ENCODE measurements at regions of chr21 and their contacts with region 1.

Region 1: DNA sequence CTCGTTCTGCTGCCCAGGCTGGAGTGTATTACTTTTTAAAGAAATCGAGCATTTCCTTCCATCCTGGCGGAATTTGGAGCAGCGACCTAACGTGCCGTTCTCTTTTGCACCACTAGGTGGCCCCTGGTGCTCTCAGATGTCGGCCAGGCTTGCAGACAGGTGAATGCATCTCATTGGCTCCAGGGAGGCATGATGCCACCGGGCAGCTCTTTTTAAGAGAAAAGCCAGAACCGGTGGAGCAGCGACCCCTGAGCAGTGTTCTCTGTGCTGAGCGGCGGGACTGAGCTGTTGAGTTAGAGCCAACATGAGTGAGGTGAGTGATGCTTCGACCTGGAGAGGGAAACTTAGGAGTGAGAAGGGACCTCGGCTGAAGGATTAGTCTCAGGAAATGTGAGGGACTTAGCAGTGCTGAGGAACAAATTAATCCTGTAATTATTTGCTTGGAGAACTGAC is at the start of gene PCP4:
- DNase-seq: peak; percentile 78 to 93
- H3K4me3 ChIP-seq: no peak within 1 kb of the TSS; a peak in 2 of 8 replicates
- H3K27ac ChIP-seq: no peak within 1 kb of the TSS
- H3K4me1 ChIP-seq: peaks cover 0 to 5% (median 1%) of the 10 kb centered on the region in 4 experiments; a peak in 4 of 7 replicates
- H3K27me3 ChIP-seq: no peaks in the 10 kb centered on the region
- CTCF ChIP-seq: peak; percentile 87 to 97 (median 87)
- EP300 ChIP-seq: no peak
- POLR2A ChIP-seq: no peak
- RAD21 ChIP-seq: peak; percentile 92 to 93
- total RNA-seq, gene PCP4: 1.8 and 2.3 TPM in 2 replicates

Region 2: DNA sequence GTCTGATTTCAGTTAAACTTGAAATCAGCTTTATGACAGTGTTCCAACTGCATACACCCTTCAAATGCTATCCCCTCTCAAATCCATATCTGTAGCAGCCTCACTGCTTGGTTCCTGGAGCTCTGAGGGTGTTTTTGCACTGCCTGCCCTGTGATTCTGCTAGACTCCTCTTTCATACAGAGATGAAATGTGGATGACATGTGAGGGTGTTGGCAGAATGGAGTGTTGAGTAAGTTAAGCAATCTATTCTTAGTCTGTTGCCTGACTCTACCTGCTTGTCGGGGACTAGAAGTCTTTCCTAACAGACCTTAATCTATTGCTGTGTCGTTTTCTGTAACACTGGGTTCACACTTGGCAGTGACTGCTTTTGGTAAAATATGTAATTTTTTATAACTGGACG is 112.4 kb before region 1 on chr21:
- CTCF ChIA-PET with region 1: no interaction called
- POLR2A ChIA-PET with region 1: no interaction called
- DNase-seq: no peak
- H3K4me3 ChIP-seq: no peak overlapping the region
- H3K27ac ChIP-seq: no peak overlapping the region
- H3K4me1 ChIP-seq: no peaks in the 10 kb centered on the region
- H3K27me3 ChIP-seq: no peaks in the 10 kb centered on the region; a peak in 1 of 7 replicates
- CTCF ChIP-seq: no peak
- EP300 ChIP-seq: no peak
- POLR2A ChIP-seq: no peak
- RAD21 ChIP-seq: no peak

Region 3: GRCh38 chr21:39852021-39852721 is 15.1 kb before region 1 on chr21:
- CTCF ChIA-PET with region 1: interaction called, 26 read pairs
- POLR2A ChIA-PET with region 1: no interaction called
- DNase-seq: no peak
- H3K4me3 ChIP-seq: no peak overlapping the region
- H3K27ac ChIP-seq: no peak overlapping the region
- H3K4me1 ChIP-seq: 0 out of 7 replicates have a peak, but pooled peaks cover 0 to 4% (median 0%) of the 10 kb centered on the region in 4 experiments
- H3K27me3 ChIP-seq: no peaks in the 10 kb centered on the region
- CTCF ChIP-seq: no peak
- EP300 ChIP-seq: no peak
- POLR2A ChIP-seq: no peak
- RAD21 ChIP-seq: no peak

Region 4: GRCh38 chr21:39882151-39882838 is 15.1 kb after region 1 on chr21:
- CTCF ChIA-PET with region 1: interaction called, 41 read pairs
- POLR2A ChIA-PET with region 1: no interaction called
- DNase-seq: no peak
- H3K4me3 ChIP-seq: no peak overlapping the region
- H3K27ac ChIP-seq: no peak overlapping the region
- H3K4me1 ChIP-seq: peaks cover 0 to 4% (median 0%) of the 10 kb centered on the region in 4 experiments; a peak in 1 of 7 replicates
- H3K27me3 ChIP-seq: no peaks in the 10 kb centered on the region
- CTCF ChIP-seq: no peak
- EP300 ChIP-seq: no peak
- POLR2A ChIP-seq: no peak
- RAD21 ChIP-seq: no peak

Region 5: GRCh38 chr21:40126065-40126464 is 258.8 kb after region 1 on chr21:
- CTCF ChIA-PET with region 1: interaction called, 116 read pairs
- POLR2A ChIA-PET with region 1: no interaction called
- DNase-seq: no peak
- H3K4me3 ChIP-seq: no peak overlapping the region
- H3K27ac ChIP-seq: no peak overlapping the region
- H3K4me1 ChIP-seq: no peaks in the 10 kb centered on the region
- H3K27me3 ChIP-seq: no peaks in the 10 kb centered on the region
- CTCF ChIP-seq: no peak
- EP300 ChIP-seq: no peak
- POLR2A ChIP-seq: no peak
- RAD21 ChIP-seq: no peak

Measured in H1 (cell line).